ENCODE measurements at regions of chr14 and their contacts with region 1.

Region 1: DNA sequence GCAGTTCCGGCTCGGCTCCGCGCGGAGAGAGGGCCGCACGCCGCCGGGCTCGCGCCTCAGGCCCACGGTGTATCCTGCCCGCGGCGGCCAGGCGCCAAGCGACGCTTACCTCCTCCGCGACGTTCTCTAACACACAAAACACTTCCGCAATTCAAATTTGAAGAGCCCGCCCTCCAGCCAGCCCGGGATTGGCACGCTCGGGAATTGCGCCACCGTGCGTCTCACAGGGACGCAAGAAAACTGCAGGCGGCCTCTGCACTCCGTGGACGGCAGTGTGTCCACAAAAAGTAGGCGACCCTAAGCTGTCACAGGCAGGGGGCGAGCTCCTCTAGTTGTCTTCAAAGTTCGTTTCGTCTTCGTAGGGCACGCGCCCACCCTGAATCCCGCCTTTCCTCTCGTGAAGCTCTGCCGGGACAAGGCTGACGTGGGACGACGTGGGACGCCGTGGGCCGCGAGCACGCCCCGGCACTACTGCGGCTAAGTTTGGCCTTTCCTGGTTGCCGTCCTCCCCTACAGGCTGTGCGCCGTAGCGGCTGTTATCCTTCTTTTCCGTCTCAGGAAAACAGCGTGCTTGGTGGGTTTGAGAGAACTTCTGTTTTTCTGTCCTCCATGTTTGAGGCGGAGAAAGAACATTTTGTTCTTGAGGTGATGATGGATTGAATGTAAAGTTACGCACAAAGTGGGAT is at the start of gene MIS18BP1:
- DNase-seq: peak; percentile 97
- H3K4me3 Mint-ChIP-seq: peak within 1 kb of the TSS; percentile 87
- H3K27ac Mint-ChIP-seq: peak within 1 kb of the TSS; percentile 98
- H3K4me1 Mint-ChIP-seq: peaks cover 30% of the 10 kb centered on the region
- H3K27me3 Mint-ChIP-seq: peaks cover 8% of the 10 kb centered on the region
- total RNA-seq, gene MIS18BP1: 81.9 to 90.6 TPM

Region 2: GRCh38 chr14:45242706-45243105 is 10.5 kb before region 1 on chr14:
- CTCF ChIA-PET with region 1: interaction called, 14 read pairs
- POLR2A ChIA-PET with region 1: no interaction called
- DNase-seq: no peak
- H3K4me3 Mint-ChIP-seq: no peak overlapping the region
- H3K27ac Mint-ChIP-seq: no peak overlapping the region
- H3K4me1 Mint-ChIP-seq: peaks cover 2% of the 10 kb centered on the region
- H3K27me3 Mint-ChIP-seq: no peaks in the 10 kb centered on the region

Region 3: GRCh38 chr14:45298423-45299117 is 45.4 kb after region 1 on chr14:
- CTCF ChIA-PET with region 1: no interaction called
- POLR2A ChIA-PET with region 1: no interaction called
- DNase-seq: no peak
- H3K4me3 Mint-ChIP-seq: no peak overlapping the region
- H3K27ac Mint-ChIP-seq: no peak overlapping the region
- H3K4me1 Mint-ChIP-seq: peaks cover 14% of the 10 kb centered on the region
- H3K27me3 Mint-ChIP-seq: peaks cover 8% of the 10 kb centered on the region